MCF 10A (cell line): ENCODE measurements at regions of chr21 and their contacts with region 1.

Region 1: DNA sequence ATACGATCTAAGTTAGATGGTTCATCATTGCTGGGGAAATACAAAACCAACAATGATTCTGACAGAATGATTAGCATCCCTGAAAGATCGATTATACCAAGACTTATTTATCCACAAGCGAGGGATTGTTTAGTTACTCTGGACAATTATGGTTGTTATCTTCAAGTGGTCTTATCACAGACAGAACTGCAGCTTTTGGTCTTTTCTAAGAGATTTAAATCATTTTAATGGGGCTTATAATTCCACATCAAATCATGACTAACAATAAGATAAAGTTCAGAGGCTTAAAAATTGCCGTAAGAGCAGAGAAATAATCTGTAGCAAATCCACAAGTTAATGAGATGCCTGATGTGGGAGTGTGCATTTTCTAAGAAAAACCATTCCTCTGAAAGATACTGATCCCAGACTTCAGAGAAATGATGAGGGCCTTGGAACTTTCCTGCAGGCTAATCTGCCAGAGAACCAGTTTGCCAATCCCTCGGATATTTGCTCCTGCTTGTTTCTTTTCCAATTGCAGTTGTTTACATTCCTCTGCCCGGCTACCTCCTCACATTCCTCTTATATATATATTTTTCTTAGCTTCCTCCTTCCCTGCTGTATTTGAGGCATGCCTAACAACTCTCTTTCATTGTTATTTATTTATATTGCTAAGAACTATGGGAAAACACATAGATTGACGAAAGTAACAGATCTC is 134.8 kb downstream of the BACH1 start:
- DNase-seq: no peak
- H3K4me3 Mint-ChIP-seq: no peak overlapping the region
- H3K27ac Mint-ChIP-seq: no peak overlapping the region
- H3K4me1 Mint-ChIP-seq: no peaks in the 10 kb centered on the region
- H3K27me3 Mint-ChIP-seq: no peaks in the 10 kb centered on the region
- CTCF ChIP-seq: no peak

Region 2: GRCh38 chr21:29360799-29361765 is 72.4 kb before region 1 on chr21:
- CTCF ChIA-PET with region 1: no interaction called
- POLR2A ChIA-PET with region 1: no interaction called
- intact Hi-C with region 1: loop called (anchors 2 kb)
- DNase-seq: no peak
- H3K4me3 Mint-ChIP-seq: no peak overlapping the region
- H3K27ac Mint-ChIP-seq: no peak overlapping the region
- H3K4me1 Mint-ChIP-seq: peaks cover 6% of the 10 kb centered on the region
- H3K27me3 Mint-ChIP-seq: no peaks in the 10 kb centered on the region
- CTCF ChIP-seq: no peak